ENCODE measurements at regions of chr7 and their contacts with region 1.

Region 1: GRCh38 chr7:107725151-107725740 is 18.7 kb upstream of the CBLL1 start:
- DNase-seq: no peak

Region 2: GRCh38 chr7:107462740-107463444 is 262.4 kb before region 1 on chr7:
- intact Hi-C with region 1: loop called (anchors 5 kb)
- DNase-seq: peak; percentile 81